ENCODE measurements at regions of chr12 and their contacts with region 1.

Region 1: DNA sequence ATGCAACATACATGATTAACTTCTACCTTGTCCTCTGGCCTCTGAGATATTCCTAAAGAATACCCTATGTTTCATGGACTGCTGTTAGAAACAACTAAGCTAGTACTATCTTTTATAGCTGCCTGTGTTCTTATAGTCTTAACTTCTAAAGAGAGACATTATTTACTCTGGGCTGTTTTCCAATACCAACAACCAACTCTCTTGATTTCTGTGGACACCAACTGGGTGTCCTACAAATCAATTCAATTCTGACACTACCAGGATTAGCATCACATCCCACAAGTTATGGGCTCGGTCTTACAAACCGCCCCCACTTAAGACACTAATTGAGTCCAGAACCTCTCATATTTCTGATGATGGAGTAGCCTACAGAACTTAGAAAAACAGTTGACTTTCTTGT is 8.3 kb downstream of the XPOT start:
- DNase-seq: no peak
- H3K4me3 ChIP-seq: no peak overlapping the region
- H3K27ac ChIP-seq: no peak overlapping the region
- H3K4me1 ChIP-seq: no peaks in the 10 kb centered on the region
- H3K27me3 ChIP-seq: no peaks in the 10 kb centered on the region
- CTCF ChIP-seq: no peak
- EP300 ChIP-seq: no peak
- POLR2A ChIP-seq: no peak

Region 2: GRCh38 chr12:64480148-64480547 is 67.7 kb after region 1 on chr12:
- intact Hi-C with region 1: loop called (anchors 10 kb)
- DNase-seq: no peak
- H3K4me3 ChIP-seq: no peak overlapping the region
- H3K27ac ChIP-seq: no peak overlapping the region
- H3K4me1 ChIP-seq: no peaks in the 10 kb centered on the region
- H3K27me3 ChIP-seq: no peaks in the 10 kb centered on the region
- CTCF ChIP-seq: no peak
- EP300 ChIP-seq: no peak
- POLR2A ChIP-seq: no peak

Region 3: GRCh38 chr12:64610149-64610678 is 197.8 kb after region 1 on chr12 and contains the start of gene RASSF3:
- intact Hi-C with region 1: no loop called
- DNase-seq: no peak
- H3K4me3 ChIP-seq: peak within 1 kb of the TSS; percentile 71 to 99 (median 88)
- H3K27ac ChIP-seq: peak within 1 kb of the TSS; percentile 90 to 94 (median 93)
- H3K4me1 ChIP-seq: peaks cover 13 to 50% (median 43%) of the 10 kb centered on the region in 4 donors
- H3K27me3 ChIP-seq: no peaks in the 10 kb centered on the region
- CTCF ChIP-seq: no peak
- EP300 ChIP-seq: no peak
- POLR2A ChIP-seq: peak; percentile 6
- total RNA-seq, gene RASSF3: 124 to 299 (median 229) TPM